Activated naive CD4-positive, alpha-beta T cell treated with anti-CD3 and anti-CD28 coated beads for 36 hours (primary cell): ENCODE measurements at regions of chr15 and their contacts with region 1.

Region 1: DNA sequence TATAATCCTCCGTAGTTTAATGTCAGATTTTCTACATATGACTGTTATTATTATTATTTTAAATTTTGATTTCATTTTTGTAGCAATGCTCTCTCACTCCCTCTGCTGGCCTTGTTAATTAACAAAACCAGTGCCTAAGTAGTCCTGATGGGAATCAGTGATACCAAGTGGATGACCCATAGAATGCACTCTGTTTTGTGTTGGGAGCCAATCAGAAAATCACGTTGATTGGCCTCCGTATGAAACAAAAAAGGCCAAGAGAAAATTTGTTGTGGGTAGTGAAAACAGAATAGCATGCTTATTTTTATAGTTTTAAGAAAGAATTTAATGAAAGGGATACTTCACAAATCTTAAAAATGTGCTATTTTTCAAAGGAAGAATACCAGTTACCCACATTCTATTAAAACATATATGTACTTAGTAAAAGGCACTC is 34.4 kb upstream of the MEIS2 start:
- DNase-seq: no peak
- H3K4me3 Mint-ChIP-seq: no peak overlapping the region
- H3K27ac Mint-ChIP-seq: no peak overlapping the region
- H3K4me1 Mint-ChIP-seq: no peaks in the 10 kb centered on the region
- H3K27me3 Mint-ChIP-seq: peaks cover 26% of the 10 kb centered on the region

Region 2: GRCh38 chr15:35519541-35520149 is 1615.1 kb before region 1 on chr15:
- CTCF ChIA-PET with region 1: no interaction called
- intact Hi-C with region 1: loop called (anchors 10 kb)
- DNase-seq: no peak
- H3K4me3 Mint-ChIP-seq: no peak overlapping the region
- H3K27ac Mint-ChIP-seq: no peak overlapping the region
- H3K4me1 Mint-ChIP-seq: peaks cover 6% of the 10 kb centered on the region
- H3K27me3 Mint-ChIP-seq: no peaks in the 10 kb centered on the region

Region 3: DNA sequence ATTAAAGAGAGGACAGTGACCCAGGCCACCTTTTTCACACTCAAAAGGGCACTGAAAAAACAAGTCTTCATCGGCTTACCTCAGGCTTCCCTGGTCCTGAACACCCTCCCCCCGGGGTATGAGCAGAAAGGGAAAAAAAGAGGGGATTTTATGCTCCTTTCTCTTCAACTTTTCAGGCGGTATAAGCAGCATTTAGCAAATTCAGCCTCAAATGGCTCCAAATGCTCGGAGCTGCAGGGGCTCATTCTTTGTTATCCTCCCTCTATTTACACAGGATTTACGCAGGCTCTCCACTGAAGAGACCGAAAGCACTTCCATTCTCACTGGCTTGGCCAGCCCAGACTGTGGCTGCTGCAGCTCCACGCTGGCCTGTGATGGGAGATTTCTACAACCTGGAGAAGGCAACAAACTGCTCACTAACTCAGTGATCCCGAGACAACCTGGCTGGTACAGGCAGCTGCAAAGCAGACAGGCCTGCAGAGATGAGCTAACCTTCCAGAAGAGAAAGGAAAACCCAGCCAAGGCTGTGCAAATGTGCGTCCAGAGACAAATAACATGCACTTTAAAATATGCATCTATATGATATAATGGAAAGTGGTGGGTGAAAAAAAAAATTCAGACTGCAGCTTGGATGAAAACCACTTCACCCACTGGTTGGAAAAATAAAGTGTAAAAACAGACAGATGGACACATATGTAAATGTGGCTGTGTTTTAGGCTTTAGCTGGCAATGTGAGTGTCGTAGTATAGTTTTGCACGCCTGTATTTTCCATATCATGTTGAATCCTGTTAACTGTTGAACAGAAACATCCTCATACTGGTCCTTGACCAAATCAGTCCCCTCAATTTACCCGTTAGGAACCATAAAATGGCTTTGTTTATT is 88.6 kb before region 1 on chr15:
- CTCF ChIA-PET with region 1: no interaction called
- intact Hi-C with region 1: no loop called
- DNase-seq: no peak
- H3K4me3 Mint-ChIP-seq: no peak overlapping the region
- H3K27ac Mint-ChIP-seq: no peak overlapping the region
- H3K4me1 Mint-ChIP-seq: no peaks in the 10 kb centered on the region
- H3K27me3 Mint-ChIP-seq: peaks cover 10% of the 10 kb centered on the region